ENCODE measurements at regions of chr20 and their contacts with region 1.

Region 1: DNA sequence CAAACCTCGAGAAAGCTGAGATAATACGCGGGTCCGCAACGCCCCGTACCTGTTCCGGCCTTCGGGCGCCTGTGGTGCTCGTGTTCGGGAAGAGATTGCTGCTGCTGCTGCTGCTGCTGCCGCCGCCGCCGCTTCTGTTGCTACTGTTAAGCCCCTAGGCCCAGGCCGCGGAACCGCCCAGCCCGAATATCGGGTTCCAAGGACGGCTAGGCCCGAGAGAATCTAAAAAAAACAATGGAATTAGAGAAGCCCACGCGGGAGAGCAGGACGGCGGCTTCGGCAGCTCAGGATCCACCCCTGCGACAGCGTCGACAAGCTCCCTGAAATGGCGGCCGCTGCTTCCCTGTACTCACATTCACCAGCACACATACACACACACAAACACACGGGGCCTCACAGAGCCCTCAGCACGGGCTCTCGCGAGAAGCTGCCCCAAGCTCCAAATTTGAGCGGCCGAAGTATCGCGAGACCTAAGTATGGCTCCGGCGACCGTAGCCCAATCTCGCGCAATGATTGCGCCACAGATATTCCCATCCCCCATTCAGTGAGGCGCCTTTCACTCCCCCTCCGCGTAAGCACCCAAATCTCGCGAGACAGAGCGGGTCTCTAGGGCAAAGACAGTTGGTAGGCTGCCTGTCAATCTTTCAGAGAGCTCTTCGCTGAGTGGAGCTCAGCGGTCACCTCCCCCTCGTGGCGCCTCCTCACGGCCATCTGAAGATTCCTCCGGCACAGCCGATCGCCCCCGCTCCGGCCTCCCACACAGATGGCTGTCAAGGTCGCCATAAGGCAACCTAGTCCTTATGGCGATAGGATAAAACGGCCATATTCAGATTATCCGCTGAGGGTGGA is at the start of gene RBM39:
- DNase-seq: peak; percentile 95 to 100
- ATAC-seq: peak; percentile 93 to 95
- H3K4me3 ChIP-seq: peak within 1 kb of the TSS; percentile 87
- H3K27ac ChIP-seq: peak within 1 kb of the TSS; percentile 98
- H3K4me1 ChIP-seq: peaks cover 45% of the 10 kb centered on the region
- CTCF ChIP-seq: no peak
- EP300 ChIP-seq: peak in 1 of 2 experiments; percentile 49; a peak in 1 of 5 replicates
- POLR2A ChIP-seq: peak; percentile 89
- RAD21 ChIP-seq: 0 out of 5 replicates have a peak, but pooled peaks of 1 of the 2 experiments have one; percentile 18
- polyA plus RNA-seq, gene RBM39: 127 and 264 TPM in 2 replicates

Region 2: DNA sequence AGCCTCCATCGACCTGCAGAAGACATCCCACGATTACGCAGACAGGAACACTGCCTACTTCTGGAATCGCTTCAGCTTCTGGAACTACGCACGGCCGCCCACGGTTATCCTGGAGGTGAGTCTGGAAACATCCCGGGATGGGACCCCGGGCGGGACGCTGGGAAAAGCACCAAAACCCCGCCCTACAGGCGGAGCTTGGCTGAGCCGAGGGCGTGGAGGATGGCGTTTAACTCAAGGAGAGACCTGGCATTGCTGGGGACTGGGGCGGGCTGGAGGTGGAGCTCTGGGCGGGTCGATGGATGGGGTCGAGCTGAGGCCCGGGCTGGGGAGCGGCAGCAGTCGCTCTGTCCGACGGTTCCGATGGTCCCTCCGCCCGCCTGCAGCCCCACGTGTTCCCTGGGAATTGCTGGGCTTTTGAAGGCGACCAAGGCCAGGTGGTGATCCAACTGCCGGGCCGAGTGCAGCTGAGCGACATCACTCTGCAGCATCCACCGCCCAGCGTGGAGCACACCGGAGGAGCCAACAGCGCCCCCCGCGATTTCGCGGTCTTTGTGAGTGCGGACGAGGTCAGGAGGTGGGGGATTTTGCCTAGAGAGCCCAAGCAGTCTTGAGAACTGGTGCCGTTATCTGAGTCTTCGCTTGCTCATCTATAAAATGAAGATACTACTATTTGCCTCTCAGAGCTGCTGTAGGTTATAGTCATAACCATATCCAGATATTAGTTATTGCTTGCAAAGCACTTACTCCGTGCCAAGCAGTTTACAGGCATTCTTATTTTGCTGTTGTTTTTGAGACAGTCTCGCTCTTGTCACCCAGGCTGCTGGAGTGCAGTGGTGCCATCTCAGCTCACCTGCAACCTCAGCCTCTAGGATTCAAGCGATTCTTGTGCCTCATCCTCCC is 122.7 kb before region 1 on chr20:
- CTCF ChIA-PET with region 1: no interaction called
- POLR2A ChIA-PET with region 1: interaction called, 15 read pairs
- DNase-seq: peak; percentile 89 to 96
- ATAC-seq: peak; percentile 66 to 79
- H3K4me3 ChIP-seq: peak overlapping the region; percentile 61
- H3K27ac ChIP-seq: peak overlapping the region; percentile 80 to 90
- H3K4me1 ChIP-seq: peaks cover 18% of the 10 kb centered on the region
- CTCF ChIP-seq: peak; percentile 75
- EP300 ChIP-seq: no peak
- POLR2A ChIP-seq: peak; percentile 37; the same call in 1 of the 2 replicates
- RAD21 ChIP-seq: peak in 1 of 2 experiments; percentile 35; a peak in 3 of 5 replicates

Region 3: GRCh38 chr20:35629427-35630145 is 112.5 kb before region 1 on chr20:
- CTCF ChIA-PET with region 1: no interaction called
- POLR2A ChIA-PET with region 1: no interaction called
- DNase-seq: no peak
- ATAC-seq: peak in 1 of 2 experiments; percentile 46; a peak in 1 of 6 replicates
- H3K4me3 ChIP-seq: no peak overlapping the region
- H3K27ac ChIP-seq: no peak overlapping the region
- H3K4me1 ChIP-seq: peaks cover 8% of the 10 kb centered on the region; the same call in 2 of the 3 replicates
- CTCF ChIP-seq: no peak
- EP300 ChIP-seq: no peak
- POLR2A ChIP-seq: no peak
- RAD21 ChIP-seq: no peak

Region 4: GRCh38 chr20:35718972-35719635 is 23.0 kb before region 1 on chr20:
- CTCF ChIA-PET with region 1: interaction called, 4 read pairs
- POLR2A ChIA-PET with region 1: interaction called, 15 read pairs
- DNase-seq: no peak
- ATAC-seq: no peak
- H3K4me3 ChIP-seq: no peak overlapping the region
- H3K27ac ChIP-seq: no peak overlapping the region
- H3K4me1 ChIP-seq: no peaks in the 10 kb centered on the region
- CTCF ChIP-seq: no peak
- EP300 ChIP-seq: no peak
- POLR2A ChIP-seq: no peak
- RAD21 ChIP-seq: no peak

Region 5: DNA sequence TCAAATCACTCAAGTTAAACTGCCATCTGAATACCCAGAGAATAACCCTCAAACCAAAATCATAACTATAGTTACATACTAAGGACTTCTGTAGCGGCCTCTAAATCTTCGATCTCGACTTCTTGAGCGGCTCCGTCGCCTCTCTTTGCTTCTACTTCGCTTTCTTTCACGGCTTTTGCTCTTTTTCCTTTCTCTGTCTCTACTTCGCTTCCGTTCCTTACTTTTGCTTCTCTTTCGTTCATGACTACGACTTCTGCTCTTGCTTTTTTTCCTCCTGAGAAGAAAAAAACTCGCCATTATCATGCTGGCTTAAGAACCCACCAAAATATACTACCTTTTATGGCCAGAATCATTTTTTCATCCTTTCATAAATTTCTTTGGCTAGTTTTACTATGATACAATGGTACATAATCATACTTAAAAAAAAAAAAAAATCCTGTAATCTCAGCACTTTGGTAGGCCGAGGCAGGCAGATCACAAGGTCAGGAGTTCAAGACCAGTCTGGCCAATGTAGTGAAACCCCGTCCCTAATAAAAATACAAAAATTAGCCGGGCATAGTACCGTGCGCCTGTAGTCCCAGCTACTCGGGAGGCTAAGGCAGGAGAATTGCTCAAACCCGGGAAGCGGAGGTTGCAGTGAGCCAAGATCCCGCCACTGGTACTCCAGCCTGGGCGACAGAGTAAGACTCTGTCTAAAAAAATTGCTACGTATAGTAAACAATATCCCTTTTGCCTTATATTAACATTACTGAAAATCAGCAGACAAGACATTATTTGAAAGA is 10.1 kb before region 1 on chr20:
- CTCF ChIA-PET with region 1: interaction called, 14 read pairs
- POLR2A ChIA-PET with region 1: interaction called, 38 read pairs
- DNase-seq: no peak
- ATAC-seq: no peak
- H3K4me3 ChIP-seq: no peak overlapping the region
- H3K27ac ChIP-seq: no peak overlapping the region
- H3K4me1 ChIP-seq: peaks cover 59% of the 10 kb centered on the region
- CTCF ChIP-seq: no peak
- EP300 ChIP-seq: no peak
- POLR2A ChIP-seq: no peak
- RAD21 ChIP-seq: no peak

Region 6: DNA sequence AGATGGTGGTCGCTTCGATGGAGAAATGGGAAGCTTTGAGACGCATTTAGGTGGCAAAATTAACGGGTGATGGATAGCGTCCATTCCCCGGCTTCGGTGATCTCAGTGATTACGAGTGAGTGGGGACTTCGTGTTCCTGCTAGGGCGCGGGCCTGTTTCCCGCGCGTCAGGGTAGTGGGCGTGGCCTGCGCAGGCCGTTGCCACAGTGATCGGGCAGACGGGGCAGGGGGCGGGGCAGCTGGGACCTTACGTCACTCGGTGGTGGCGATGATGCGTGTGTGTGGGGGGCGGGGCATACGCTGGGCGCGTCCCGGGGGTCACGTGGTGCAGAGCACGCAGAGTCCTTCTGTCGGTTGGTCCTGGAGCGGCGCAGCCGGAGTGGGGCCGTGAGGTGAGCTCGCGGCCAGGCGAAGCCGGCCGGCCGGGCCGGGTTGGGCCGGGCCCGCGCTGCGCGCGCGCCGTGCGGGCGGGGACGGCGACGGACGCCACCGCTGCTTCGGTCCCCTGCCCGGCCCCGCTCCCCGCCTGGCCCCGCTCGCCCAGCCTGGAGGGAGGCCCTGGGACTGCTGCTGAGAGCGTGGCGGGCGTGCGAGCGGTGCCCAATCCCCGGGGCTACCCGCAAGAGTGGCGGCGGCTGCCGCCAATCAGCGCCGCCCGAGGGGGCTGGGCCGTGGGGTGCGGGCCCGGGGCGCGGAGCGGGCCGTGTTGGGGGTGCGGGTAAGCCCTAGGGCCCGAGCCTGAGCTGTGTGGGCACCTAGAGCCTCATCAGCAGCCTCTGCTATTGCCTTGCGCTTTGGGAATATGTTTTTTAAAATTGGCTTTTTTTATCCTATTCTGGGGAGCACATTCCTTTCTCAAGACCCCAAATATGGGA is 29.8 kb after region 1 on chr20 and contains the start of gene PHF20:
- CTCF ChIA-PET with region 1: interaction called, 12 read pairs
- POLR2A ChIA-PET with region 1: interaction called, 97 read pairs
- DNase-seq: peak; percentile 90 to 99
- ATAC-seq: peak; percentile 92
- H3K4me3 ChIP-seq: peak within 1 kb of the TSS; percentile 68
- H3K27ac ChIP-seq: peak within 1 kb of the TSS; percentile 92
- H3K4me1 ChIP-seq: peaks cover 41% of the 10 kb centered on the region
- CTCF ChIP-seq: no peak
- EP300 ChIP-seq: no peak
- POLR2A ChIP-seq: peak; percentile 69
- RAD21 ChIP-seq: no peak
- polyA plus RNA-seq, gene PHF20: 27.9 and 32.8 TPM in 2 replicates

Region 7: GRCh38 chr20:35901678-35902544 is 159.8 kb after region 1 on chr20:
- CTCF ChIA-PET with region 1: no interaction called
- POLR2A ChIA-PET with region 1: interaction called, 12 read pairs
- DNase-seq: peak; percentile 76 to 80
- ATAC-seq: peak; percentile 95 to 97
- H3K4me3 ChIP-seq: no peak overlapping the region
- H3K27ac ChIP-seq: peak overlapping the region; percentile 75 to 84
- H3K4me1 ChIP-seq: peaks cover 18% of the 10 kb centered on the region
- CTCF ChIP-seq: no peak
- EP300 ChIP-seq: no peak
- POLR2A ChIP-seq: no peak
- RAD21 ChIP-seq: no peak

Measured in A549 (cell line).